Calu3 (cell line): ENCODE measurements at regions of chr10 and their contacts with region 1.

Region 1: GRCh38 chr10:71963756-71964668 is at the start of gene CHST3:
- DNase-seq: peak; percentile 61
- H3K4me3 Mint-ChIP-seq: peak within 1 kb of the TSS; percentile 95
- H3K27ac Mint-ChIP-seq: peak within 1 kb of the TSS; percentile 30
- H3K4me1 Mint-ChIP-seq: peaks cover 43% of the 10 kb centered on the region
- H3K27me3 Mint-ChIP-seq: peaks cover 18% of the 10 kb centered on the region
- CTCF ChIP-seq: no peak
- total RNA-seq, gene CHST3: 14.3 and 32.4 TPM in 2 replicates

Region 2: GRCh38 chr10:72026278-72027111 is 62.5 kb after region 1 on chr10:
- CTCF ChIA-PET with region 1: no interaction called
- intact Hi-C with region 1: loop called (anchors 5 kb)
- DNase-seq: peak; percentile 41
- H3K4me3 Mint-ChIP-seq: no peak overlapping the region
- H3K27ac Mint-ChIP-seq: no peak overlapping the region
- H3K4me1 Mint-ChIP-seq: peaks cover 31% of the 10 kb centered on the region
- H3K27me3 Mint-ChIP-seq: no peaks in the 10 kb centered on the region
- CTCF ChIP-seq: no peak